Panc1 (cell line): ENCODE measurements at regions of chr15 and their contacts with region 1.

Region 1: GRCh38 chr15:45402162-45402954 is 24.0 kb upstream of the GATM start:
- DNase-seq: peak; percentile 97
- ATAC-seq: peak; percentile 96
- H3K4me3 ChIP-seq: peak overlapping the region; percentile 86 to 98
- H3K27ac ChIP-seq: peak overlapping the region; percentile 100
- H3K4me1 ChIP-seq: peaks cover 15% of the 10 kb centered on the region
- H3K27me3 ChIP-seq: no peaks in the 10 kb centered on the region
- CTCF ChIP-seq: no peak

Region 2: GRCh38 chr15:45307230-45307924 is 95.0 kb before region 1 on chr15:
- CTCF ChIA-PET with region 1: no interaction called
- POLR2A ChIA-PET with region 1: no interaction called
- in situ Hi-C with region 1: no loop called
- intact Hi-C with region 1: loop called (anchors 2 kb)
- DNase-seq: no peak
- ATAC-seq: peak; percentile 48
- H3K4me3 ChIP-seq: 0 out of 4 replicates have a peak overlapping the region, but pooled peaks of 1 of the 2 experiments have one; percentile 27
- H3K27ac ChIP-seq: no peak overlapping the region
- H3K4me1 ChIP-seq: peaks cover 4% of the 10 kb centered on the region; the same call in 1 of the 2 replicates
- H3K27me3 ChIP-seq: no peaks in the 10 kb centered on the region; the same call in 1 of the 2 replicates
- CTCF ChIP-seq: peak; percentile 70; the same call in 1 of the 2 replicates

Region 3: DNA sequence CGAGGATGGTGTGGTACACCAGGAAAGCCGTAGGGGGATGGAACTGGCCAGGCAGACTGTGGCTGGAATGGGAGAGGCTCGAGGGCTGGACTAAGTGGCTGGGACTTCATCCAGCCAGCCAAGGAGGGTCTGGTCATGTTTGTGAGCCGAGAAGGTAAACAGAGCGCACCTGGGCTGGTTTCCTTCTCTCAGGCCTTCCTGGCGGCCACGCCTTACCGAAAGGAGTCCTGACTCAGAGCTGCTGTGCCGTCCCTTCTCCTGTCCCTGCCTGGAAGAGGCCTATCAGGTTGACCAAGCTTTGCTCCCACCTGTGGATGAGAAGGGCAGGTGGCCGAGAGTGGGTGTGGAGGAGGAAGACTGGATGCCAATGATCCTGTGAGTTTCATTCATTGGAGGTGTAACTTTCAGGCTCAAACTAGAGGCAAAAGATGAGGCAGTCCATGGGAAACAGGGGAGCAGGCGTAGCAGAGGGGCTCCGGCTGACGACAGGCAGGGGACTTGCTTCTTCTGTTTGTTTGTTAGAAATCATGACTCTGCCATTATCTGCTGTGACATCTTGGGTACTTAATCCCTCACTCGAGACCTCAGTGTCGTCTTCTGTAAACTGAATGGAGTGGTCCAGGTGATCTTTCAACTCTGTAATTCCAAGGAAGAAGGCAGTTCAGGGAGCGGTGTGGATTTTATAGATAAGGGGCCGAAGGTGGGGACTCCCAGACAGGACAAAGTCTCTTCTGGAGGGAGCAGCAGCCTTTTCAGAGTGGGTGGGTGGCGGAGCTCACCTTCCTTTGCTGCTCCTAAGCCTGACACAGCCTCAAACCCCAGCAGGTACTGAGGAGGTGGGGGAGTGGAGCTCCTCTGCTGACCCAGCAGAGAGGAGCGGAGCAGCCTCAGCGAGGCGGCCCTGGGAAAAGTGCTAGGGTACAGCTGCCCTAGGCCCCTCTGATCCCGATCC is 47.8 kb after region 1 on chr15:
- CTCF ChIA-PET with region 1: no interaction called
- POLR2A ChIA-PET with region 1: no interaction called
- in situ Hi-C with region 1: no loop called
- intact Hi-C with region 1: no loop called
- DNase-seq: no peak
- ATAC-seq: no peak
- H3K4me3 ChIP-seq: no peak overlapping the region
- H3K27ac ChIP-seq: peak overlapping the region; percentile 76
- H3K4me1 ChIP-seq: peaks cover 45% of the 10 kb centered on the region
- H3K27me3 ChIP-seq: no peaks in the 10 kb centered on the region
- CTCF ChIP-seq: no peak

Region 4: DNA sequence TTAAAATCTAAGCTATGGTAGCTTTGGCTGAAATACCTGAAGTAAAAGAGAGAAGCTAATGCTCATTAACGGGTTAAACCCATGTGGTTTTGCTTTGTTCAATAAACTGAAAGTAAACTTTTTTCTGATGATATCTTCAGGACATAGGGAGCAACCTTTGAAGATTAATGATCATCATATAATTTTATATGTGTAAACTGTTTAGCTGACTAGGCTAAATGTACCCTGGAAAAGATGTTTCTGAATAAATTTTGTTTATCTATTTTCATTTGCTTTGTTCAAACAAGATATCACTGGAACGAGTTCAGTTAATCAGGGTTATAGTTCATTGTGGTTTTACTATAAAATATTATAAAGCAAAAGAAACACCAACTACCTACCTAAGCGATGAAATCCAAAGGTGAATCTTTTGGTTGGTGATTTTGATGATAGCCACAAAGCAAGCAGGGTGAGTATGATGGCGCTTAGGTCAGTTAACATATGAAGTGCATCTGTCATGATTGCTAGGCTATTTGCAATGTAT is 108.5 kb after region 1 on chr15:
- CTCF ChIA-PET with region 1: no interaction called
- POLR2A ChIA-PET with region 1: no interaction called
- in situ Hi-C with region 1: no loop called
- intact Hi-C with region 1: no loop called
- DNase-seq: no peak
- ATAC-seq: no peak
- H3K4me3 ChIP-seq: no peak overlapping the region
- H3K27ac ChIP-seq: no peak overlapping the region
- H3K4me1 ChIP-seq: no peaks in the 10 kb centered on the region
- H3K27me3 ChIP-seq: no peaks in the 10 kb centered on the region
- CTCF ChIP-seq: no peak